ENCODE measurements at regions of chr2 and their contacts with region 1.

Region 1: DNA sequence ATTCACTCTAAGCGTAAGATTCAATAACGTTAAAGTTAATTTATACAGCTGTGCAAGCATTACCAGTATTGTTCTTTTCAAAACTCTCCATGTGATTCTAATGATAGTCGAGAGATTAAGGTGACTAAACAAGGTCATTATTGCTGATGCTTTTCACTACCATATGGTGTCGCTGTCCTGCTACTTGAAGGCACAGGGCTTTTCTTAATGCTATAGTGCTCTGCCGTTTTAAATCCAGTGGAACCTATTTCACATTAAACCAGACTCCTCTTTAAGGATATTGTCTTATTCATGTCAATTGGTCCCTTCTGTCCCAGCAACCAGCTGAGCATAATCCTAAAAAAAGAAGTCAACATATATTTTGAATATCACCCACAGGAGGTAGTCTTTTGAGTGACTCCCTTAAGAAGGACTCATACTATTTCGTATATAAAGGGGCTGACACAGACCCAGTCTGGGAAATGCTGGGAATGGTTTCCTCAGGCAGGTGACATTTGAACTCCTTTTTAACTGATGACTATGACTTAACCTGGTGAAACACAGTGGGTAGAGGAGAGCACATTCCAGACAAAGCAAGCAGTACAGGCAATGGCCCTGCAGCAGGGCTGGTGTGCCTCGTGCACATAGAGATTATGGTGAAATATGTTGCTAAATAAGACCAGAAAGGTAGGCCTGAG is 53.9 kb upstream of the CYTIP start:
- DNase-seq: no peak
- ATAC-seq: peak; percentile 97
- H3K4me3 ChIP-seq: no peak overlapping the region
- H3K27ac ChIP-seq: no peak overlapping the region
- H3K4me1 ChIP-seq: no peaks in the 10 kb centered on the region
- H3K27me3 ChIP-seq: no peaks in the 10 kb centered on the region
- CTCF ChIP-seq: peak; percentile 72 to 87 (median 82)
- EP300 ChIP-seq: no peak
- POLR2A ChIP-seq: no peak
- RAD21 ChIP-seq: peak; percentile 86

Region 2: GRCh38 chr2:157486596-157487270 is 11.0 kb before region 1 on chr2:
- CTCF ChIA-PET with region 1: interaction called, 18 read pairs
- POLR2A ChIA-PET with region 1: interaction called, 3 read pairs
- RAD21 ChIA-PET with region 1: interaction called, 6 read pairs
- SMC1A ChIA-PET with region 1: interaction called, 93 read pairs
- in situ Hi-C with region 1: no loop called
- intact Hi-C with region 1: no loop called
- DNase-seq: no peak
- ATAC-seq: no peak
- H3K4me3 ChIP-seq: no peak overlapping the region
- H3K27ac ChIP-seq: no peak overlapping the region
- H3K4me1 ChIP-seq: no peaks in the 10 kb centered on the region
- H3K27me3 ChIP-seq: no peaks in the 10 kb centered on the region
- CTCF ChIP-seq: no peak
- EP300 ChIP-seq: no peak
- POLR2A ChIP-seq: no peak
- RAD21 ChIP-seq: no peak

Region 3: GRCh38 chr2:157751462-157752058 is 253.8 kb after region 1 on chr2:
- CTCF ChIA-PET with region 1: interaction called, 11 read pairs
- POLR2A ChIA-PET with region 1: no interaction called
- RAD21 ChIA-PET with region 1: no interaction called
- SMC1A ChIA-PET with region 1: interaction called, 15 read pairs
- in situ Hi-C with region 1: no loop called
- intact Hi-C with region 1: loop called (anchors 2 kb)
- DNase-seq: peak; percentile 36
- ATAC-seq: peak; percentile 79
- H3K4me3 ChIP-seq: no peak overlapping the region
- H3K27ac ChIP-seq: no peak overlapping the region
- H3K4me1 ChIP-seq: no peaks in the 10 kb centered on the region; the same call in 1 of the 2 replicates
- H3K27me3 ChIP-seq: no peaks in the 10 kb centered on the region
- CTCF ChIP-seq: peak; percentile 27 to 40 (median 38); a peak in 5 of 6 replicates
- EP300 ChIP-seq: no peak
- POLR2A ChIP-seq: no peak
- RAD21 ChIP-seq: peak; percentile 35; the same call in 1 of the 2 replicates

Region 4: DNA sequence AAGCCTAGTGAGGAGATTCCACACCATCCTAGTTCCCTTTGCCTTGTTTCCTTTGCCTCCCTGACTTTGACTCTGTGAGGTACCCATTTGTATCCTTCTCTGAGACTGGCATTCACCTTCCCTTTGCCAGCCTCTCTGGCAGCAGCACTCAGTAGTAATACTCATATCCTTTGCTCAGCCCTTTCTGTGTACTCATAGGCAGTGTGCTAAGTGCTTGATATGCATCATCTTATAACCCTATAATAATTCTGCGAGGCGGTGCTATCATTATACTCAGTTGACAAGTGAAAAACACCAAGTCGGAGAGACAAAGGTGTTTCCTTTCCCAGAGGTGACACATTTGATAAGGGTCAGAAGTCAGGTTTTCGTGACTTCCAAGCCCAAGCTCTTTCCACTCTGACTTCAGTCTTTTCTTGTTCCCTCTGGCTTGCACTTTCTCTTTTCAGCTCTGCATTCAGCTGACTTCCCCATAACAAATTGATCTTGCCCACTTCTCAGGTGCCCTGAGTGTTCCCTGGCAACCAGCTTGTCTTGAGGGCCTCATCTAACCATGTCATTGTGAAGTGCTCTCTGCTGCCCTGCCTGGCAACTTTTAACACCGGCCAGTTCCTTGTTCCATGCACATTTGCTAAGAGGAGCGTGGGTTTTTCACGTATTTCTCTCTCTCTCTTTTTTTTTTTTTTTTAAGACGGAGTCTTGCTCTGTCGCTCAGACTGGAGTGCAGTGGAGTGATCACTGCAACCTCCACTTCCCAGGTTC is 509.4 kb after region 1 on chr2:
- CTCF ChIA-PET with region 1: interaction called, 3 read pairs
- POLR2A ChIA-PET with region 1: no interaction called
- RAD21 ChIA-PET with region 1: no interaction called
- SMC1A ChIA-PET with region 1: interaction called, 3 read pairs
- in situ Hi-C with region 1: loop called (anchors 5 kb)
- intact Hi-C with region 1: loop called (anchors 1 kb)
- DNase-seq: no peak
- ATAC-seq: peak; percentile 72
- H3K4me3 ChIP-seq: no peak overlapping the region
- H3K27ac ChIP-seq: no peak overlapping the region
- H3K4me1 ChIP-seq: no peaks in the 10 kb centered on the region
- H3K27me3 ChIP-seq: peaks cover 0 to 3% of the 10 kb centered on the region in 2 experiments; a peak in 1 of 4 replicates
- CTCF ChIP-seq: 0 out of 6 replicates have a peak, but pooled peaks of 1 of the 3 experiments have one; percentile 12
- EP300 ChIP-seq: no peak
- POLR2A ChIP-seq: no peak
- RAD21 ChIP-seq: no peak